IMR-90 (cell line): ENCODE measurements at regions of chr1 and their contacts with region 1.

Region 1: GRCh38 chr1:201559679-201560162 is 20.8 kb downstream of the NAV1 start:
- DNase-seq: peak; percentile 86
- ATAC-seq: peak; percentile 77
- H3K4me3 ChIP-seq: no peak overlapping the region
- H3K27ac ChIP-seq: peak overlapping the region; percentile 66
- H3K4me1 ChIP-seq: peaks cover 47% of the 10 kb centered on the region
- H3K27me3 ChIP-seq: no peaks in the 10 kb centered on the region
- CTCF ChIP-seq: peak; percentile 99
- POLR2A ChIP-seq: peak; percentile 71
- RAD21 ChIP-seq: peak; percentile 100

Region 2: DNA sequence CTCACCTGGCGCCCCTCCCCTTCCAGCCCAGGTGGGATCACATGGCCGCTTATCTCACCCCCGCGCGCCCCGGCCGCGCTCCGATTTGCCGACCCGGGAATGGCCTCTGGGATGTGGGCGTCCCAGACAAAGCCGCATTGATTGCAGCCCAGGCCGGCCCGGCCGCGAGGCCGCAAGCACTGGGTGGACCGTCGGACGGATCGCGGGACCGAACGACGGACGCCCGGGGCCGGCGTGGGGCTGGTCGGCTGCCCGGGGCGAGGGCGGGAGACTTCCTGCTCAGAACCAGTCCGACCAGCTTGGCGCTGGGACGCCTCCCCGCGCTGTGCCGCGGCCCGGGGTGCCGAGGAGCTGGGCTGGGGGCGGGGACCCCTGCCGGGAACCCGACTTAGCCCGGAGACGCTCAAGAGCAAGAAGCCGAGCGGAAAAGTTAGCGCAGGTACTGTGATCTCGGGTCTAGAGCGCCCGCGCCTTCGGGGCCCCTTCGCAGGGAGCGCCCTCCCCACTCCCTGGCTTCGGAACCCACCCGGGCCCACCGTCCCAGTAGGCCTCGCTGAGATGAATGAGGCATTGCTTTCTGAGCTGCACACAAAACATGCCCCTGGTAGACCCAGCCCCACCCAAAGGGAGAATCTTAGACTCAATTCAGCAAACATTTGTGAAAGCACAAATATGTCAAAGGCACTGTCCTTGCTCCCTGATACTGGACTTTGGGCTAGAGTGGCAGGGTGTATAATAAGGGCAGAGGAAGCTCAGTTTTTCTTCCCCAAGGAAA is 160.2 kb before region 1 on chr1:
- CTCF ChIA-PET with region 1: no interaction called
- POLR2A ChIA-PET with region 1: no interaction called
- dilution Hi-C with region 1: no loop called
- in situ Hi-C with region 1: no loop called
- intact Hi-C with region 1: no loop called
- DNase-seq: no peak
- ATAC-seq: peak; percentile 48
- H3K4me3 ChIP-seq: no peak overlapping the region
- H3K27ac ChIP-seq: no peak overlapping the region
- H3K4me1 ChIP-seq: no peaks in the 10 kb centered on the region
- H3K27me3 ChIP-seq: peaks cover 87% of the 10 kb centered on the region
- CTCF ChIP-seq: no peak
- POLR2A ChIP-seq: no peak
- RAD21 ChIP-seq: no peak

Region 3: GRCh38 chr1:201625226-201625761 is 65.6 kb after region 1 on chr1:
- CTCF ChIA-PET with region 1: interaction called, 7 read pairs
- POLR2A ChIA-PET with region 1: interaction called, 3 read pairs
- dilution Hi-C with region 1: no loop called
- in situ Hi-C with region 1: loop called (anchors 10 kb)
- intact Hi-C with region 1: loop called (anchors 1 kb)
- DNase-seq: peak; percentile 98
- ATAC-seq: peak; percentile 93
- H3K4me3 ChIP-seq: no peak overlapping the region
- H3K27ac ChIP-seq: peak overlapping the region; percentile 2; the same call in 1 of the 2 replicates
- H3K4me1 ChIP-seq: peaks cover 15% of the 10 kb centered on the region
- H3K27me3 ChIP-seq: no peaks in the 10 kb centered on the region
- CTCF ChIP-seq: peak; percentile 59
- POLR2A ChIP-seq: no peak
- RAD21 ChIP-seq: peak; percentile 69

Region 4: GRCh38 chr1:201703621-201704439 is 144.1 kb after region 1 on chr1:
- CTCF ChIA-PET with region 1: interaction called, 15 read pairs
- POLR2A ChIA-PET with region 1: no interaction called
- dilution Hi-C with region 1: no loop called
- in situ Hi-C with region 1: loop called (anchors 5 kb)
- intact Hi-C with region 1: loop called (anchors 1 kb)
- DNase-seq: peak; percentile 77
- ATAC-seq: peak; percentile 81
- H3K4me3 ChIP-seq: no peak overlapping the region
- H3K27ac ChIP-seq: peak overlapping the region; percentile 69
- H3K4me1 ChIP-seq: peaks cover 20% of the 10 kb centered on the region
- H3K27me3 ChIP-seq: no peaks in the 10 kb centered on the region
- CTCF ChIP-seq: peak; percentile 95
- POLR2A ChIP-seq: peak; percentile 61; the same call in 1 of the 2 replicates
- RAD21 ChIP-seq: peak; percentile 97

Region 5: GRCh38 chr1:201786824-201787223 is 227.1 kb after region 1 on chr1:
- CTCF ChIA-PET with region 1: interaction called, 19 read pairs
- POLR2A ChIA-PET with region 1: no interaction called
- dilution Hi-C with region 1: no loop called
- in situ Hi-C with region 1: loop called (anchors 5 kb)
- intact Hi-C with region 1: no loop called
- DNase-seq: no peak
- ATAC-seq: no peak
- H3K4me3 ChIP-seq: no peak overlapping the region
- H3K27ac ChIP-seq: no peak overlapping the region
- H3K4me1 ChIP-seq: peaks cover 29% of the 10 kb centered on the region
- H3K27me3 ChIP-seq: no peaks in the 10 kb centered on the region
- CTCF ChIP-seq: no peak
- POLR2A ChIP-seq: no peak
- RAD21 ChIP-seq: no peak